Activated CD4-positive, alpha-beta T cell treated with anti-CD3 and anti-CD28 coated beads for 36 hours (primary cell): ENCODE measurements at regions of chr21 and their contacts with region 1.

Region 1: GRCh38 chr21:20373031-20373430 is 625.2 kb upstream of the NCAM2 start:
- DNase-seq: no peak
- ATAC-seq: no peak
- H3K4me3 Mint-ChIP-seq: no peak overlapping the region
- H3K27ac Mint-ChIP-seq: no peak overlapping the region
- H3K4me1 Mint-ChIP-seq: no peaks in the 10 kb centered on the region
- H3K27me3 Mint-ChIP-seq: no peaks in the 10 kb centered on the region

Region 2: DNA sequence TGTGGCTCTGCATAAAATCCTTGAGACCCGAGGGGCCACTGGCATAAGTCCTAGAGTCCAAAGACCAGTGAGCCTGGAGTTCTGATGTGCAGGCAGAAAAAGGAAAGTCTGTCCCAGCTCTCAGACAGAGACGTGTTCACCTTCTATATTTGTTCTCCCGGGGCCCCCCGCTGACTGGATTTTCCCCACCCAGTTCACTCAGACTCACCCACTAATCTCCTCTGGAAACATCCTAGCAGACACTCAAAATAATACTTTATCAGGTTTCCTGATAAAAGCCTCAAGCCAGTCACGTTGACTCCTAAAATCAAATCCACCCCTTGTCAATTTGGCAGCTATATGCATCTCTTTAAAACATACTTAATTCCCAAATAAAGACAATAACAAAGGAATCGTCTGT is 459.0 kb before region 1 on chr21:
- CTCF ChIA-PET with region 1: no interaction called
- POLR2A ChIA-PET with region 1: no interaction called
- intact Hi-C with region 1: no loop called
- DNase-seq: no peak
- ATAC-seq: no peak
- H3K4me3 Mint-ChIP-seq: no peak overlapping the region
- H3K27ac Mint-ChIP-seq: no peak overlapping the region
- H3K4me1 Mint-ChIP-seq: no peaks in the 10 kb centered on the region
- H3K27me3 Mint-ChIP-seq: no peaks in the 10 kb centered on the region

Region 3: GRCh38 chr21:20341431-20341830 is 31.6 kb before region 1 on chr21:
- CTCF ChIA-PET with region 1: no interaction called
- POLR2A ChIA-PET with region 1: no interaction called
- intact Hi-C with region 1: loop called in 1 of 2 experiments (anchors 1 kb)
- DNase-seq: no peak
- ATAC-seq: no peak
- H3K4me3 Mint-ChIP-seq: no peak overlapping the region
- H3K27ac Mint-ChIP-seq: no peak overlapping the region
- H3K4me1 Mint-ChIP-seq: no peaks in the 10 kb centered on the region
- H3K27me3 Mint-ChIP-seq: no peaks in the 10 kb centered on the region

Region 4: DNA sequence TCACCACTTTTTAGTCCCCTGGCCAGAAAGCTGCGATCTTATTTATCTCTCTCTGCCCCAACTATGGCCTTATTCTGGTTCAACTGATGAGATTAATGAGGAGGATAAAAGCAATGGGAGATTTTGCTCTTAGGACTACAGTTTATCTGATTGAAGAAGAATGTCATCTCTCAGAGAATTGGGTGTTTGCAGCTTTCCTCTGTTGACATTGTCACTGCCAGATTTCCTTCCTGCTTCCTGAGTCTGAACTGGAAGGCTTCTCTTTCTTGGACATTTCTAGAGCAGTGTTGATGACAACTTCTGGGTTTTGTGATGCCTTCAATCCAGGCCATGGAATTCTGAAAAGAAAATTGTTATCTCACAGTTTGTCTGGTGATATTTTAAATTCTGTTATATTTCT is 942.4 kb after region 1 on chr21:
- CTCF ChIA-PET with region 1: no interaction called
- POLR2A ChIA-PET with region 1: no interaction called
- intact Hi-C with region 1: loop called in 1 of 2 experiments (anchors 10 kb)
- DNase-seq: no peak
- ATAC-seq: no peak
- H3K4me3 Mint-ChIP-seq: no peak overlapping the region
- H3K27ac Mint-ChIP-seq: no peak overlapping the region
- H3K4me1 Mint-ChIP-seq: no peaks in the 10 kb centered on the region
- H3K27me3 Mint-ChIP-seq: no peaks in the 10 kb centered on the region